Breast epithelium (tissue), 4 donors: ENCODE measurements at regions of chr2 and their contacts with region 1.

Region 1: DNA sequence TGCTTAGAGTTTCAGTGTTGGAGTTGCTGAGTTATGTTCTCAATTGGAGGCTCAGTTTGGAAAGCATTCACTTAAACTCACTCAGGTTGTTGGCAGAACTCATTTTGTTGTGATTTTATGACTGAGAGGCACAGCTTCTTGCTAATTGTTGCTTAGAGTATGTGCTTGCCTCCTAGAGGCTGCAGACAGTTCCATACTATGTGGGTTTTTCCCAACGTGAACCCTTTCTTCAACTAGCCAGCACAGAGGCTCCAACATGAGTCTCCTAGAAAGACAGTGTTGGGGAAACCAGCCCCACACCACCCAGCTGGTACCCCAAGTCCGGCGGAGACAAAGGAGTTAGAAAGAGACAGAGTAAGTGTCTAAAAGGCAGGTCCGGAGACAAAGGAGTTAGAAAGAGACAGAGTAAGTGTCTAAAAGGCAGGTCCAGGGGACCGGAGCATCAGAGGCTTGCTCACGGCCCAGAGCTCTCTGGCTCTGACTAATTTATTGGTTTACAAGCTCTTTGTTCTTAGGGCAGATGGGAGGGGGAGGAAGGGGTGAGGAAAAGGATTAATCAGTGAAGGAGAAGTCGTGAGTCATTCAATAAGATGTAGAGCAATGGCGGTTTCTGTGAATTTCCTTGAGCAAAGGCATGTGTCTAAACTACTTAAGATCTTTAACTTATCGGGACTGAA is 999.7 kb upstream of the LRRTM1 start:
- DNase-seq: no peak
- H3K4me3 ChIP-seq: no peak overlapping the region
- H3K27ac ChIP-seq: no peak overlapping the region
- H3K4me1 ChIP-seq: no peaks in the 10 kb centered on the region
- H3K27me3 ChIP-seq: no peaks in the 10 kb centered on the region
- CTCF ChIP-seq: no peak
- POLR2A ChIP-seq: no peak

Region 2: DNA sequence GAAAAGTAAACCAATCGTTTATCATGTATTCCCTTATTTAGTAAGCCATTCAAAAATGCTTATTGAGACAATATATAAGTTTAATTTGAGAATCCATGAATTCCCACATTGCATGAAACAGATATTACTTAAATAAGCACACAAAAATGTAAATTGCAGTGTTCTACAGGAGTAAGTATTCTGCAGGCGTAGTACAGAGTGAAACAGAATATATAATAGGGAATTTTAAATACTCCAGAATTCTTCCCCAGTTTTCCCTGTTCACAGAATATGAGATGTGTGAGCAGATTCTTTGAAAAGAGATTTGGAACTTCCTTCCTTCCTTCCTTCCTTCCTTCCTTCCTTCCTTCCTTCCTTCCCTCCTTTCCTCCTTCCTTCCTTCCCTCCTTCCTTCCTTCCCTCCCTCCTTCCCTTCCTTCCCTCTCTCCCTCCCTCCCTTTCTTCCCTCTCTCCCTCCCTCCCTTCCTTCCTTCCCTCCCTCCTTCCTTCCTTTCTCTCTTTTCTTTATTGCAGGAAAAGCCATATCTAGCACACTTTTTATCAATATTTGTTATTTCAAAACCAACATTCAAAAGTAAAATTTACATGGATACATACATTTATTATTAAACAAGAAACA is 22.0 kb before region 1 on chr2:
- intact Hi-C with region 1: loop called (anchors 1 kb)
- DNase-seq: no peak
- H3K4me3 ChIP-seq: no peak overlapping the region
- H3K27ac ChIP-seq: no peak overlapping the region
- H3K4me1 ChIP-seq: no peaks in the 10 kb centered on the region
- H3K27me3 ChIP-seq: no peaks in the 10 kb centered on the region
- CTCF ChIP-seq: no peak
- POLR2A ChIP-seq: no peak

Region 3: DNA sequence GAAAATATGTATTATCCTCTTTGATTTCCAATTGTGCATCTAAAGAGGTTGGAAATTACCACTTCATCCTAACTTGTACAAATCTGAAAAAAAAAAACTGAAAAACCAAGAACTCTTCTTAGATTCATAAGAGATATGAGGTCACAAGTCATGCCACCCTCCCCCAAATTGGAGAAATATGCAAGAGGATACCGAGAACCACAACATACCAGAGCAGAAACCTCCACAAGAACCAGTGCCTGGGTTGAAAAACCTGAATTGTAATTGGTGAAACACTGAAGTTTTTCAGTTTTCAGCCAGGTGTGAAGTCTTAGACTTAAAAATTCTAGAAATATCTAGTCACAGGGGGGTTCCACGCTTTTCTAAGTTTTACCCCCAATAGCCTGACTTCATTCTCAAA is 29.8 kb after region 1 on chr2:
- intact Hi-C with region 1: loop called (anchors 2 kb)
- DNase-seq: no peak
- H3K4me3 ChIP-seq: no peak overlapping the region
- H3K27ac ChIP-seq: no peak overlapping the region
- H3K4me1 ChIP-seq: no peaks in the 10 kb centered on the region
- H3K27me3 ChIP-seq: no peaks in the 10 kb centered on the region
- CTCF ChIP-seq: no peak
- POLR2A ChIP-seq: no peak

Region 4: GRCh38 chr2:81363800-81364199 is 59.5 kb after region 1 on chr2:
- intact Hi-C with region 1: no loop called
- DNase-seq: no peak
- H3K4me3 ChIP-seq: no peak overlapping the region
- H3K27ac ChIP-seq: no peak overlapping the region
- H3K4me1 ChIP-seq: no peaks in the 10 kb centered on the region
- H3K27me3 ChIP-seq: no peaks in the 10 kb centered on the region
- CTCF ChIP-seq: no peak
- POLR2A ChIP-seq: no peak